MCF 10A (cell line): ENCODE measurements at regions of chr12 and their contacts with region 1.

Region 1: GRCh38 chr12:52023182-52023975 is 16.6 kb downstream of the TAMALIN start:
- DNase-seq: peak; percentile 64
- H3K4me3 Mint-ChIP-seq: peak overlapping the region; percentile 78
- H3K27ac Mint-ChIP-seq: peak overlapping the region; percentile 23
- H3K4me1 Mint-ChIP-seq: peaks cover 11% of the 10 kb centered on the region
- H3K27me3 Mint-ChIP-seq: peaks cover 12% of the 10 kb centered on the region
- CTCF ChIP-seq: peak; percentile 86

Region 2: DNA sequence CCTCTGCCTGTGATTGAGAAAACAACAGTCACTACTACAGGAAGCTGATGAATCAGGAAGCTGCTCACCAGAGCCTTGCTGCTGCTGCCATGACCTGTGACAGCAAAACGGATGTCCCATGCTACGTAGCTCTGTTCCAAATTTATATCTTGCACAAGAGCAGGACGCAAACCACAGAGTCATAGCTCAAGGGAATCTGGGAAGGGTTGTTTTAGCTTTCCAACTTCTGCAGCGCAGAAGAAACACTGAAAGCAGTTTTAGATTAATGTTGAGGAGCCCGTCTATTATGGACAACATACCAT is 137.4 kb before region 1 on chr12:
- CTCF ChIA-PET with region 1: interaction called, 13 read pairs
- POLR2A ChIA-PET with region 1: no interaction called
- intact Hi-C with region 1: no loop called
- DNase-seq: peak; percentile 81
- H3K4me3 Mint-ChIP-seq: peak overlapping the region; percentile 25
- H3K27ac Mint-ChIP-seq: peak overlapping the region; percentile 74
- H3K4me1 Mint-ChIP-seq: peaks cover 14% of the 10 kb centered on the region
- H3K27me3 Mint-ChIP-seq: no peaks in the 10 kb centered on the region
- CTCF ChIP-seq: no peak

Region 3: GRCh38 chr12:51923501-51924271 is 99.7 kb before region 1 on chr12:
- CTCF ChIA-PET with region 1: interaction called, 9 read pairs
- POLR2A ChIA-PET with region 1: no interaction called
- intact Hi-C with region 1: loop called (anchors 2 kb)
- DNase-seq: peak; percentile 44
- H3K4me3 Mint-ChIP-seq: no peak overlapping the region
- H3K27ac Mint-ChIP-seq: no peak overlapping the region
- H3K4me1 Mint-ChIP-seq: peaks cover 5% of the 10 kb centered on the region
- H3K27me3 Mint-ChIP-seq: no peaks in the 10 kb centered on the region
- CTCF ChIP-seq: peak; percentile 81

Region 4: GRCh38 chr12:51994959-51995358 is 28.4 kb before region 1 on chr12:
- CTCF ChIA-PET with region 1: interaction called, 258 read pairs
- POLR2A ChIA-PET with region 1: interaction called, 6 read pairs
- intact Hi-C with region 1: loop called (anchors 1 kb)
- DNase-seq: no peak
- H3K4me3 Mint-ChIP-seq: no peak overlapping the region
- H3K27ac Mint-ChIP-seq: no peak overlapping the region
- H3K4me1 Mint-ChIP-seq: peaks cover 5% of the 10 kb centered on the region
- H3K27me3 Mint-ChIP-seq: no peaks in the 10 kb centered on the region
- CTCF ChIP-seq: no peak

Region 5: GRCh38 chr12:52010152-52010622 is 13.2 kb before region 1 on chr12:
- CTCF ChIA-PET with region 1: interaction called, 97 read pairs
- POLR2A ChIA-PET with region 1: no interaction called
- intact Hi-C with region 1: no loop called
- DNase-seq: no peak
- H3K4me3 Mint-ChIP-seq: no peak overlapping the region
- H3K27ac Mint-ChIP-seq: no peak overlapping the region
- H3K4me1 Mint-ChIP-seq: no peaks in the 10 kb centered on the region
- H3K27me3 Mint-ChIP-seq: peaks cover 17% of the 10 kb centered on the region
- CTCF ChIP-seq: no peak

Region 6: GRCh38 chr12:52050761-52051541 is 27.6 kb after region 1 on chr12 and contains the start of gene NR4A1:
- CTCF ChIA-PET with region 1: interaction called, 16 read pairs
- POLR2A ChIA-PET with region 1: interaction called, 3 read pairs
- intact Hi-C with region 1: no loop called
- DNase-seq: peak; percentile 92
- H3K4me3 Mint-ChIP-seq: peak within 1 kb of the TSS; percentile 75
- H3K27ac Mint-ChIP-seq: peak within 1 kb of the TSS; percentile 95
- H3K4me1 Mint-ChIP-seq: peaks cover 22% of the 10 kb centered on the region
- H3K27me3 Mint-ChIP-seq: peaks cover 11% of the 10 kb centered on the region
- CTCF ChIP-seq: no peak
- total RNA-seq, gene NR4A1: 0.69 and 2.9 TPM in 2 replicates

Region 7: DNA sequence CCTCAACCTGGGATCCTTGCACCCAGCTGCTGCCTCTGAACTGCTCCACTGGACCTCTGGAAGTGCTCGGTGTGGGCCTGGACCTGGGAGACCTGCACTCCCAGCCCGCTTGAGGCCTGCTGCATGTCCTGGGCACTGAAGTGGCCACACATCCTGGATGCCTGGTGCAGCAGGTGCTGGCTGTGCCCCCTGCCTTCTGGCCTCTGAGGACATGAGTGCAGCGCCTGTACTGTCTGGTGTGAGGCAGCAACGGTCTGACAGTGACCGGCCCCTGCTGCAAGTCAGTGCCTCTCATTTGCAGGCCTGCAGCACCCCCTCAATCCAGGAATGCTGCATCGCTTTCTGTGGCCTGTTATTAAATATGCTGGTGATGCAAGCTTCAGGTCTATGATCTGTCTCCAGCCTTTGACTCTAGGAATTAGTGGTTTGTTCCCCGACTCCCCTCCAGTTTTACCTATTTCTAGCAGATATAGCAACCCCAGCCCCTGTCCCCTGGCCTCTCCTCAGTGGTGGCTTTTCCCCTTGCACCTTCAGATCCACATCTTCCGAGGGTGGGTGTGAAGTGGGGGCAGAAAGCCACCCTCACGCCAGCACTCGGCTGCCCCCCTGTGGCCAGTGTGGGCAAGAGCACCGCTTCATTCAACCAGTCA is 59.7 kb after region 1 on chr12:
- CTCF ChIA-PET with region 1: interaction called, 560 read pairs
- POLR2A ChIA-PET with region 1: interaction called, 4 read pairs
- intact Hi-C with region 1: loop called (anchors 1 kb)
- DNase-seq: peak; percentile 54
- H3K4me3 Mint-ChIP-seq: no peak overlapping the region
- H3K27ac Mint-ChIP-seq: no peak overlapping the region
- H3K4me1 Mint-ChIP-seq: peaks cover 14% of the 10 kb centered on the region
- H3K27me3 Mint-ChIP-seq: peaks cover 28% of the 10 kb centered on the region
- CTCF ChIP-seq: peak; percentile 95